Right ventricle myocardium inferior (tissue), 1 donor: ENCODE measurements at regions of chr4 and their contacts with region 1.

Region 1: GRCh38 chr4:498328-498904 is 540 bp downstream of the ZNF721 start:
- DNase-seq: no peak
- ATAC-seq: no peak

Region 2: DNA sequence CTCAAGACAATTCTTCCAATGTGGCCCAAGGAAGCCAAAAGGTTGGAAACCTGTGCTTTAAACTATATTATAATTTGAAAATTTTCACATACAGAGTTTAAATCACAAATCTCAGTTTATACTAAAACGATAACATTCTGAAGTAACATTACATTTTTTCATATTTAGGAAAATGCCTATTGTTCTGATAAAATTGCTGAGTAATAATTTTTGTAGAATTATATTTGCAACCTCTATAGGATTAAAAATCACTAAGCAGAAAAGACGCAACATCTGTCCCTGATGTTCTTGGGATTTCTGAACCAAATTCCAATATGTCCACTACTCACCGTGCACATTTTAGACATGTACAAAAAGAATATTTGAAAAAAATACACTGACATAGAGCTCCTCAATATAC is 203.7 kb before region 1 on chr4:
- intact Hi-C with region 1: no loop called
- DNase-seq: no peak
- ATAC-seq: no peak

Region 3: DNA sequence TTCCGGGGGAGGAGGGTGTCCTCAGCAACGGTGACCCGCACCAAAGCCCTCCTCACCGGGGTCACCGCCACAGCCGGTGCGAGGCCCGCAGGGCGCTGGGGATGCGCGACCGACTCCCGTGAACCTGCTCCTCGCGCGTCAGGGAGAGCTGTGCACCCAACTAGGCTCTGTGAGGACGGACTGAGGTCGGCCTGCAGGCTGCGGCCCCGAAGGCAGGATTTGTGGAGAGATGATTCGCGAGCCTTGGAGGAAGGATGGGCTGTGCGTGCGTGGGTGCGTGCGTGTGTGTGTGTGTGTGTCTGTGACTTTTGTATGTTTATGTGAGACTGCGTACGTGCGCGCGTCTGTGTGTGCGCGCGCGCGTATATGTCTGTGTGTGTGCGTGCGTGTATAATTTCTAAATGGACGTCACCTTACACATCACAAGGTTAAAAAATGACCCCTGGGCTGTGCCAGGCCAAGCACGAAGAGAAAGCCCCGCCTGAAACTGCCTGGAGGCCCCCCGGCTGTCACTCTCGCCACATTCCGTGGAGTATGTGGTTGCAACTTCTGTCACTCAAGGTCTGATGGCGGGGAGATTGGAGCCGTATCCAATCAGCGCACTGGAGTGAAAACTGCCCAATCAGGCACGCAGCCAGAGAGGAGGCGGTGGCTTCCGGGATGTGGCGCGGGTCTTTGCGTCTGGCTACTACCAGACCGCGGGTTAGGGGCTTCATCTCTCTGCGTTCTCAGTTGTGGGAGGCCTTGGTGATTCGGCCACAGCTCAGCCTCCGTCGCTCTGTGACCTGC is 161.1 kb before region 1 on chr4 and contains the start of gene ZNF141:
- intact Hi-C with region 1: loop called (anchors 10 kb)
- DNase-seq: peak; percentile 96
- ATAC-seq: peak; percentile 98
- total RNA-seq, gene ZNF141: 7.5 TPM

Region 4: DNA sequence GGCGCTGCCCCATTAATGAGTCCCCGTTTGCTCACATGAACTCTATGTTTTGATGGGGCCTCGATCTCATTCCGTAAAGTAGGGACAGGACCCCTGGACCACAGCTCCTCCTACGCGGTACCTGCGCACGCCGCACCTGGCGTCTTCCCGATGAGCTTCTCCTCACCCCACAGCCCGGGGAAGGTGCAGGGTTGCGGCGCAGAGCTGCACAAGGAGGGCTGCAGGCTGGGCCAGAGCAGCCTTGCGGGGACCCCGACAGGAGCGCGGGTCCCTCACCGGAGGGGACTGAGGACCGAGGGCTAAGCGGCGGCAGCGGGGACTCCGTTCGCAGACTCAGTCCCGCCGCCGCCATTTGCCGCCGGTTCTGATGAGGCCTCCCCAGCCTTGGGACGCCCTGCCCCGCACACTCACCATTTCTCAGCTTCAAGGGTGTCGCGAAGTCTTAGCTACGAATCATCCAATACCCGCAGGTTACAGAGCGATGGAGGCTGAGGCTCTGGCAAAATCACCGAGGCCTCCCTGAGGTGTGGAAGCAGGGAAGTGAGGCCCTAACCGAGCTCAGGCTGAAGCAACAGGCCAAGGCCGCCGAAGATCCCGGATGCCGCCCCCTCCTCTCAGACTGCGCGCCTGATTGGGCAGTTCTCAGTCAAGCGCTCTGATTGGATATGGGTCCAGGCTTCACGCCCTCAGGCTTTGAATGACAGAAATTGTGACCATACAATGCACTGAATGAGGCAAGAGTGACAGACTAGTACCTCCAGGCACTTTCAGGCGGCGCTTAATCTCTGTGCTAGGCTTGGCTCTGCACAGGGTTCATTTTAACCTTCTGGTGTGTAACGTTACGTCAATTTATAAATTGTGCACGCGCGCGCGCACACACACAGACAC is 24.6 kb before region 1 on chr4:
- intact Hi-C with region 1: loop called (anchors 2 kb)
- DNase-seq: peak; percentile 94
- ATAC-seq: peak; percentile 100

Region 5: DNA sequence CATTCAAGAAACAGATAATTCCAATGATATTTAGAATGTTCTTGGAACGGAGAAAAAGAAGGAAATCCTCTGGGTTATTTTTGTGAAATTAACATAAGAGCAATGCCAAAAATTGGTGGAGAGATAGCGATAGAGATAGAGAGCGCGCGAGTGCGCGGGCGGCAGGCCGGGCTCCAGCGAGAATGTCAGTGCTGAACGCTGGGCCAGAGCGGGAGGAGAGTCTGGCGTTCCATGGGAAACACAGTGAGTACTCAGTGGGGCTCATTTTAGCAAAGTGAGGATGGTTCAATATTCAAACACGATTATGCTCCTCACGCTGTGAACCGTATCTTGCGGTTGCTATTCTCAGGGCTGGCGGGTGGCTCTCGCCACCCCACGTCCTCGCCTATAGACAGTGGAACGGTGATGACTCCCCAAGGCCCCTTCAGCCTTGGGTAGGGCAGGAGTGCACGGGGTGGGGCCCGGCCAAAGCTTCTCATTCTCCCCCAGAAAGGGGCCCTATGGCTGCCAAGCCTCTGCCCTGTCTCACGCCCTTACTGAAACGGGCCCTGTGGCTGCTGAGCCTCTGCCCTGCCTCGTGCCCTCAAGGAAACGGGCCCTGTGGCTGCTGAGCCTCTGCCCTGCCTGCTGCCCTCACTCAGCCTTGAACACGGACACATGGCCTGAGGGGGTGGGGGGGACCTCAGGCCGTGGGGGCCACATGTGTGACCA is 310.6 kb after region 1 on chr4:
- intact Hi-C with region 1: no loop called
- DNase-seq: peak; percentile 48
- ATAC-seq: peak; percentile 44

Region 6: DNA sequence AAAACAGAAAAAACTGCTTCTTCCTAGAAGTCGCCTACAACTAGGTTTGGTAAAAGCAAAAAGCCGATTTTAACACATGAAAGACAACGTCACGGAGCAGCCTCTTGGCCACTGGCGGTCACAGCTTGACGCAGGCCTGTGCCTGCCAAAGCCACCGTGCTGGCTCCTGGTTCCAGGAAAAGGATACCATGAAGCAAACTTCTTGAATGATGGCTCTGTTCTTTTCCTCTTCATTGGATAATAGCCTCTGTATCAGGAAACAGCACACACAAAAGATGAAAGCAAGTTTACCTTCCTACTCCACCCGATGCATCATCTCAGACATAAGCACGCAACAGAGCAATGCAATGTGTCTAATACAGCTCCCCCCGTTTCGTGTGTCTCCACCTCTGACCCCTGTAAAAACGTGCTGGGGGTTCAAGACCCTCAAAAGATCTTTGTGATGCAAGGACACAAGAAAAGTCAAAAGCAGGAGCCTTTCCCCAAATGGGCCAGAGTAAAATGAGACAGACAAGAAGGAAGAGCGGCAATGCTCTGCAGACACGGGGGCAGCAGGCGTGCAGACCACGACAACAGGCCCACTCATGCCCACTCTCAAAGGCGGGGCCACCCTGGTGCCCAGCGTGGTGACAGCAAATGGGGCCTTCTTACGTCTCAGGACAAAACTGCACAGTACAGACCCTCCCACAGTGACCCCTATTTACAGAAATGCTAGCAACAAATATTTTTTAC is 414.3 kb after region 1 on chr4:
- intact Hi-C with region 1: no loop called
- DNase-seq: peak; percentile 44
- ATAC-seq: no peak